ENCODE measurements at regions of chr3 and their contacts with region 1.

Region 1: DNA sequence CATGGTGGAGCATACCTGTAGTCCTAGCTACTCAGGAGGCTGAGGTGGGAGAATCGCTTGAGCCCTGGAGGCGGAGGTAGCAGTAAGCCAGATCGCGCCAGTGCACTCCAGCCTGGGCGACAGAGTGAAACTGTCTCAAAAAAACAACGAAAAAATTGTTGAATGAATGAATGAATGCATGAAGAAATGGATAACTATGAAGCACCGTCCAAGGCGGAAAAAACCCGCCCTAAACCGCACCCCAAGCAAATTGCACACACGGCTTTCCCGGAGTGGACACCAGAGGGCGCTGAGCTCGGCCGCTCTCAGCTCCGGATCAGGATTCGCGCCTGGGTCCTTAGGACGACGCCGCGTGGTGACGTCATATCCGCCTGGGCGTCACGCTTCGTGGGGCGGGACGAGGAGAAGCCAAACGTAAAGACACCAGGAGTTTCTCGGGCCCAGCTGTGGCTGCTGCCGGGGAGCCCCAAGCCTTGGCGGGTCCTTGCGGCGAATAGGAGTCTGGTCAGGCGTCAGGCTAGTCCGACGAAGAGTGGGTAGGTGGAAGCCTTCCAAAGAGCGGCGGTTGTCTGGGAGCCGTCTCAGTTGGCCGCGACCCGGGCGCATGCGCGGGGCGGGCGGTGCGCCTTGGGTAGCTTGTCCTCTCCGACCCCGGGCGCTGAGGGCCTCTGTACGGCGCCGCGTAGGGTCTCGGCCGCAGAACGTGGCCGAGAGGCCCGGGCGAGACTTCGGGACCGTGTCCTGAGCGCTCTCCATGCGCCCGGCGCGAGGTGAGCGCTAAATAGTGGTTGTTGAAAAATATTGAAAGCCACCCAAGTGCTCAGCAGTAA is at the starts of genes HTD2 and RPP14:
- DNase-seq: peak; percentile 97
- ATAC-seq: peak; percentile 82
- H3K4me3 Mint-ChIP-seq: peak within 1 kb of the TSS; percentile 95
- H3K27ac Mint-ChIP-seq: peak within 1 kb of the TSS; percentile 98
- H3K4me1 Mint-ChIP-seq: peaks cover 11% of the 10 kb centered on the region
- H3K27me3 Mint-ChIP-seq: peaks cover 17% of the 10 kb centered on the region
- CTCF ChIP-seq: peak; percentile 83
- total RNA-seq, gene HTD2: 9.9 to 14.5 TPM (median 11.4 TPM) in 3 replicates
- total RNA-seq, gene RPP14: 16.7 to 17.9 TPM (median 17.0 TPM) in 3 replicates

Region 2: DNA sequence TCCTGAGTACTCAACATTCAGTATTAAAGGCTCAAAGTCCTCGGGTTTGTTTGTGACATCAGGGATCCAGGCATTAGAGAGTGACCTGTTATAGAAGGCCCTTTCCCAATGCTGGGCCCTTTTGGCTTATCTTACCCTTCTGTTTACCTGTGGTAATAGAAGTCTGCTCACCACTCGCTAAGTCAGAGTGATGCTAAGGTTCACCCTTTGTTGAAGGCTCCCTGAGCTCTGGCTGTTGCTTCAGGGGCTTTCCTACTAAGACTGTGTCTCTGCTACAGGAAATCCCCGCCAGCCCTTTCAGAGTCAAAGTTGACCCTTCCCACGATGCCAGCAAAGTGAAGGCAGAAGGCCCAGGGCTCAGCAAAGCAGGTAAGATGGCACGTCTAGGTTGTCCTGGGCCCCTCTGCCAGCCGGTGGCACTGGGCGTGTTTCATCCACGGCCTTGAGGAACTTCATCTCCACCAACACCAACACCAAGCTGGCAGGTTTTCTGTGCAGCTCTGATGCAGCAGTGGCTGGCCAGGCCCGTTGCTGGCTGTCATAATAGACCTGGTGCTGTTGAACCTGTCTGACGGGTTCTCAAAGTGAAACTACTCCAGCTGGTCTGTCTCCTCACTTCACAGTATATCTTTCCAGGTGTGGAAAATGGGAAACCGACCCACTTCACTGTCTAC is 194.4 kb before region 1 on chr3:
- CTCF ChIA-PET with region 1: no interaction called
- POLR2A ChIA-PET with region 1: no interaction called
- DNase-seq: no peak
- ATAC-seq: no peak
- H3K4me3 Mint-ChIP-seq: no peak overlapping the region
- H3K27ac Mint-ChIP-seq: no peak overlapping the region; the same call in 1 of the 2 replicates
- H3K4me1 Mint-ChIP-seq: no peaks in the 10 kb centered on the region
- H3K27me3 Mint-ChIP-seq: no peaks in the 10 kb centered on the region
- CTCF ChIP-seq: no peak

Region 3: DNA sequence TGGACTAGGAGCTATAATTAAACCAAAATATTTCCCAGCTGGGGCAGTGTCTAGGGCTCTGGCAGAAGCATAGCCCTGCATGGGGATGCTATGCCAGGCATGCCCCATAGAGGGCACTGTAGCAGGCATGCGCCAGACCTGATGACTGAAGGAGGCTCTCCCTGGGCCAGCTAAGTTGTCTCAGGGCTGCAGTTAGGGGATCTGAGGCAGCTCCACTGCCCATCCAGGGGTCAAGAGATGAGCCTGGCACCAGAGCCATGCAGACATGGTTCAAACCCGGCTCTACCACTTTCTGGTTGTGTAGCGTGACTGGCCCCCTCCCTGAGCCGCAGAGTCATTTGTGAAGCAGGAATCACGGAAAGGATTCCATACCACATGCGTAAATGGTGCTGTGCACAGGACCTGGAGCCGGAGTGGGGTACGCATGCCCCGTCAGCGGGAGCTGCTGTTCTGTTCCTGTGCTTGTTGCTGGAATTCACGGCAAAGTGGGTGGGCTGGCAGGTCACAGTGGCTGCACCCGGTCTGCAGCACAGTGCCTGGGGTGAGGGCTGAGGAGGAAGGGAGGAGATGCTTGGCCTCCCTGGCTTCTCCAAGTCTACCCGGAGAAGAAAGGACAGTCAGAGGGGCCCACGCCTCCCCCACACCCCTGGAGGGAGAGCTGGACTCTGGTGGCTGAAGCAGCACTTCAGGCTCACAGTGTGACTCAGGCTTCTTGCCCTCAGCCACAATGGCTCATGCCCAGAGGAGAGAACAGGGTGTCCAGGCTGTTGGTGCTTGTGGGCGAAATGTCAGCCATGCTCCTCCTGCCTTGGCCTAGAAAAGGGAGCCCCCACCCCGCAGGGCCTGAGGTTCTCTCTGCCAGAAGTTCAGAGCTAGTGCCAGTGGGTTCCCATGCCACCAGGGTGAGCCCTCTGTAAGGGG is 138.4 kb before region 1 on chr3:
- CTCF ChIA-PET with region 1: interaction called, 14 read pairs
- POLR2A ChIA-PET with region 1: no interaction called
- DNase-seq: peak; percentile 82
- ATAC-seq: peak; percentile 94
- H3K4me3 Mint-ChIP-seq: no peak overlapping the region
- H3K27ac Mint-ChIP-seq: no peak overlapping the region
- H3K4me1 Mint-ChIP-seq: peaks cover 2% of the 10 kb centered on the region; the same call in 1 of the 2 replicates
- H3K27me3 Mint-ChIP-seq: no peaks in the 10 kb centered on the region
- CTCF ChIP-seq: peak; percentile 97

Region 4: GRCh38 chr3:58217209-58217811 is 88.8 kb before region 1 on chr3:
- CTCF ChIA-PET with region 1: interaction called, 36 read pairs
- POLR2A ChIA-PET with region 1: interaction called, 4 read pairs
- DNase-seq: peak; percentile 78
- ATAC-seq: peak; percentile 91
- H3K4me3 Mint-ChIP-seq: peak overlapping the region; percentile 46
- H3K27ac Mint-ChIP-seq: peak overlapping the region; percentile 71; the same call in 1 of the 2 replicates
- H3K4me1 Mint-ChIP-seq: peaks cover 10% of the 10 kb centered on the region
- H3K27me3 Mint-ChIP-seq: no peaks in the 10 kb centered on the region
- CTCF ChIP-seq: peak; percentile 51; the same call in 1 of the 2 replicates

Region 5: GRCh38 chr3:58324391-58325390 is 18.6 kb after region 1 on chr3:
- CTCF ChIA-PET with region 1: interaction called, 34 read pairs
- POLR2A ChIA-PET with region 1: interaction called, 3 read pairs
- DNase-seq: no peak
- ATAC-seq: no peak
- H3K4me3 Mint-ChIP-seq: no peak overlapping the region
- H3K27ac Mint-ChIP-seq: peak overlapping the region; percentile 23; the same call in 1 of the 2 replicates
- H3K4me1 Mint-ChIP-seq: peaks cover 33% of the 10 kb centered on the region
- H3K27me3 Mint-ChIP-seq: no peaks in the 10 kb centered on the region
- CTCF ChIP-seq: no peak

Region 6: DNA sequence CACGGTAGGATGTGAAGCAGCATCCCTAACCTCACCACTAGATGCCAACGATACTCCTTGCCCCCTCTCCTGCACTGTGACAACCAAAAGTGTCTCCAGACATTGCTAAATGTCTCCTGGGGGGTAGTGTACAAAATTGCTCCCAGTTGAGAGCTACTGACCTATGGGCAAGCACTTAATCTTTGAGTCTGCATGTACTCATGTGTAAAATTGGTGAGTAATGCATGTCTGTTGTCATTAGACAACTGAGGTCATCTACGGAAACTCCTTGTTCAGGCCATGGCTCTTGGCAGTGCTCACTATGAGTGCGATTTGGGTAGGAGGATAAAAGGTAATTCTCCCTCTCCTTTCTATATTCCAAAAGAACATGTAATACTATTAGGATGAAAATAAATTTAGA is 98.3 kb after region 1 on chr3:
- CTCF ChIA-PET with region 1: interaction called, 10 read pairs
- POLR2A ChIA-PET with region 1: interaction called, 5 read pairs
- DNase-seq: no peak
- ATAC-seq: no peak
- H3K4me3 Mint-ChIP-seq: no peak overlapping the region
- H3K27ac Mint-ChIP-seq: no peak overlapping the region
- H3K4me1 Mint-ChIP-seq: peaks cover 24% of the 10 kb centered on the region
- H3K27me3 Mint-ChIP-seq: no peaks in the 10 kb centered on the region
- CTCF ChIP-seq: no peak

Region 7: GRCh38 chr3:58497097-58497496 is 191.0 kb after region 1 on chr3:
- CTCF ChIA-PET with region 1: interaction called, 24 read pairs
- POLR2A ChIA-PET with region 1: interaction called, 4 read pairs
- DNase-seq: no peak
- ATAC-seq: peak; percentile 86
- H3K4me3 Mint-ChIP-seq: peak overlapping the region; percentile 57
- H3K27ac Mint-ChIP-seq: peak overlapping the region; percentile 97
- H3K4me1 Mint-ChIP-seq: peaks cover 58% of the 10 kb centered on the region
- H3K27me3 Mint-ChIP-seq: no peaks in the 10 kb centered on the region
- CTCF ChIP-seq: no peak